ENCODE measurements at regions of chr22 and their contacts with region 1.

Region 1: GRCh38 chr22:31630331-31631329 is 31.4 kb downstream of the PISD start:
- DNase-seq: peak; percentile 78 to 95
- H3K4me3 ChIP-seq: peak overlapping the region; percentile 84
- H3K27ac ChIP-seq: peak overlapping the region; percentile 51
- H3K4me1 ChIP-seq: peaks cover 39% of the 10 kb centered on the region
- H3K27me3 ChIP-seq: no peaks in the 10 kb centered on the region
- CTCF ChIP-seq: no peak; the same call in 1 of the 2 replicates

Region 2: GRCh38 chr22:31489604-31490495 is 140.8 kb before region 1 on chr22 and contains the start of gene EIF4ENIF1:
- CTCF ChIA-PET with region 1: no interaction called
- POLR2A ChIA-PET with region 1: no interaction called
- intact Hi-C with region 1: loop called (anchors 10 kb)
- DNase-seq: peak; percentile 44 to 83
- H3K4me3 ChIP-seq: peak within 1 kb of the TSS; percentile 99
- H3K27ac ChIP-seq: peak within 1 kb of the TSS; percentile 83
- H3K4me1 ChIP-seq: peaks cover 20% of the 10 kb centered on the region
- H3K27me3 ChIP-seq: no peaks in the 10 kb centered on the region
- CTCF ChIP-seq: no peak
- total RNA-seq, gene EIF4ENIF1: 15.3 and 21.8 TPM in 2 replicates

Region 3: GRCh38 chr22:31715147-31715778 is 84.6 kb after region 1 on chr22:
- CTCF ChIA-PET with region 1: no interaction called
- POLR2A ChIA-PET with region 1: no interaction called
- intact Hi-C with region 1: no loop called
- DNase-seq: no peak
- H3K4me3 ChIP-seq: no peak overlapping the region
- H3K27ac ChIP-seq: no peak overlapping the region
- H3K4me1 ChIP-seq: no peaks in the 10 kb centered on the region
- H3K27me3 ChIP-seq: no peaks in the 10 kb centered on the region
- CTCF ChIP-seq: no peak

Measured in PC-9 (cell line).